Heart left ventricle (tissue), 16 donors: ENCODE measurements at regions of chr5 and their contacts with region 1.

Region 1: DNA sequence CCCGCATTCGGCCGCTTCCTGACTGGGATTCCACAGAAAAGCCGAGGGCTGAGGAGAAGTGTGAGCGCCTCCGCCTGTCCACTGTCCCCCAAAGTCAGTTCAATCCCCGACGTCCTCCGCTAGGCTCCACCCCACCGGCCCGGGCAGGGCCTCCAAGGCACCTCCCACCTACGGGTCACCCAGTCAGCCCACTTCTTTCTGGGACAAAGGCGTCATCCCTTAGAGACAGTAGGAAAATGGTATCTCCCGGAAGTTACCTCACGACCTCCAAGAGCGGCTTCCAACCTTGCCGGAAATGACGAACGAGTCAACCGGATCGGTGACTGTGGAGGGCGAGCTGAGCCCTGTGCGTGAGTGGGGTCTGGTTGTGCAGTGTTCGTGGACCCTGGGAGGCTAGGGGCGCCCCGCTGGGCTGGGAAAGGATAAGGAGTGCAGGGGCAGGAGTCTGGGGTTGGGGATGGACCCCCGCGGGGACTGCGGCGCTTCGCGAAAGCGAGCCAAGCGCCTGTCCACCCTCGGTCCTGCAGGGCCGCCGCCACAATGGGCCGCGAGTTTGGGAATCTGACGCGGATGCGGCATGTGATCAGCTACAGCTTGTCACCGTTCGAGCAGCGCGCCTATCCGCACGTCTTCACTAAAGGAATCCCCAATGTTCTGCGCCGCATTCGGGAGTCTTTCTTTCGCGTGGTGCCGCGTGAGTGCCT is at the starts of genes GDF9 and UQCRQ:
- DNase-seq: peak; percentile 95 to 98 (median 97)
- ATAC-seq: peak; percentile 99 to 100 (median 99)
- H3K4me3 ChIP-seq: peak within 1 kb of the TSS; percentile 67 to 95 (median 86)
- H3K27ac ChIP-seq: peak within 1 kb of the TSS; percentile 90 to 97 (median 94)
- H3K4me1 ChIP-seq: peaks cover 0 to 29% (median 17%) of the 10 kb centered on the region in 12 donors
- H3K27me3 ChIP-seq: no peaks in the 10 kb centered on the region
- CTCF ChIP-seq: peak in 8 of 12 donors; percentile 13 to 55 (median 32)
- POLR2A ChIP-seq: peak; percentile 38 to 89
- total RNA-seq, gene GDF9: 0.25 to 1.00 (median 0.51) TPM in 8 of 9 donors, not detected in the other
- total RNA-seq, gene UQCRQ: 539 to 2,034 (median 1,454) TPM

Region 2: DNA sequence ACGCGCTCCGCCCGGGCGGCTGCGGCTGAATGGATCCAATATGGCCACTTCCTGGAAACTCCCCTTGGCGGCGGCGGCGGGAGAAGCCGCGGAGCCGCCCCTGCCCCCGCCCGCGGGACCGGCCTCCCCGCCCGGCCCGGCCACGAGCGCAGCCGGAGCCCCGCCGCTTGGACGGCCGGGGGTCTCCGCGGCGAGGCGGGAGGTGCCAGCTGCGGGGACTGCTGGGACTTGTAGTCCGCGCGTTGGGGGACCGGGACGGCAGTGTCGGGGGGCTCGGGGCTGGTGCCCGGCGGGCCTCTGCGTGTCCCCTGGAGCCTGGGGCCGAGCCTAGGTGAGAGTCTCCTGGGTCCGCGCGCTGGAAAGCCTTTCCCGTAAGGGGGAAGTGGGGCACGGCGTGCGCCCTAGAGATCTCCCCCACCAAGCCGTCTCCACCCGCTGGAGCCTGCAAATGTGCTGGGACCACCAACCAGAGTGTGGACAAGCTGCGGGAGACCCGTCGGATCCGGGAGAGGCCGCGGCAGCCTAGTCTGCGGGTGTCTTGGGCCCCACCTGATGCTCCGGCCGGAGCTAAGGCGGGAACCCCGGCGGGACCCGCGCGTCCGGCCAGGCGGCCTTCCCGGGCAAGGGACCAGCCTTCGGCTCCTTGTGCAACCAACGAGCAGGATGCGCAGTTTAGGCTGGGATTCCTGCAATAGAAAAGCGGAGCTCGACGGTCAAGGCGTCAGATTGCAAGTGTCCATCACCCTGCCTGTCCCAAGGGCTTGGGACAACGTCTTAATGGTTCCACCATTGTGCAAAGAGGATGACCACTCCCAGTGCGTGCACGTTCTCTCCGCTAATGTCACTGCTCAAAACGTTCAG is 89.1 kb before region 1 on chr5 and contains the start of gene SEPTIN8:
- intact Hi-C with region 1: loop called in 1 of 10 experiments (anchors 5 kb)
- DNase-seq: peak; percentile 56 to 75 (median 70)
- ATAC-seq: peak in 3 of 4 donors; percentile 58 to 66 (median 59)
- H3K4me3 ChIP-seq: peak within 1 kb of the TSS; percentile 65 to 98 (median 90)
- H3K27ac ChIP-seq: peak within 1 kb of the TSS; percentile 72 to 92 (median 86)
- H3K4me1 ChIP-seq: peaks cover 0 to 52% (median 33%) of the 10 kb centered on the region in 12 donors
- H3K27me3 ChIP-seq: peaks cover 0 to 4% (median 0%) of the 10 kb centered on the region in 9 donors
- CTCF ChIP-seq: peak in 1 of 12 donors; percentile 11
- POLR2A ChIP-seq: peak in 1 of 2 donors; percentile 15
- total RNA-seq, gene SEPTIN8: 24.5 to 47.6 (median 33.8) TPM

Region 3: DNA sequence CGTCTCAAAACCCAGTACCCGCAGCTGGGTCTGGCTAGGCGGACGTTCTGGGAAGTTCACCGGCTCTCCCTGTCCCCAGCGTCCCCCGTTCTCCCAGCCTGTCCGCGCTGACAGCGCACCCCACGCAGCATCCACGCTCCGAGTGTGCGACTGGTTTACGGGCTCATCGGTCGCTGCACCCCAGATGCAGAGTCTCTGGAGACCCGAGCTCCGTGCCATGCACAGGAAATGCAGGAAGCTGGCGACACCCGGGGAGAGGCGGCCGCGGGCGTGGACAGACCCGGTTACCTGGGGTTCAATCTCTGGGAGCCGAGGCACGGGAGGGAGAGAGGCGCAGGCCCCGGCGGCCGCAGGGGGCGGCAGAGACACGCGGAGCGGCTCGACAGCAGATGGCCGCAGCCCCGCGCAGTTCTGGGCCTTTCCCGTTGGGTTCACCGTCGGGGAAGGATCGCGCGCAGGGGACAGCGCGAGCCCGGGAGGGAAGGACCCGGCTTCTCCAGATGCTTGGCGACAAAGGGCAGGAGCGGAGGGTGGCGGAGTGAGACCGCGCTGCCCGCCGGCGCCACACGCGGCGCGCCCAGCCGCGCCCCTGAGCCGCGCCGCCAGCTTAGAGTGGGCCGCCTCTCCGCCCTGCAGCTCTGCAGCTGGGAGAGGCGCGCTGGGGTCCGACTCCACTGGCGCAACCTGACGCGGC is 36.6 kb before region 1 on chr5:
- intact Hi-C with region 1: loop called (anchors 1 to 5 kb)
- DNase-seq: peak; percentile 75 to 89 (median 82)
- ATAC-seq: peak; percentile 75 to 92 (median 88)
- H3K4me3 ChIP-seq: peak overlapping the region; percentile 54 to 90 (median 78)
- H3K27ac ChIP-seq: peak overlapping the region; percentile 63 to 91 (median 84)
- H3K4me1 ChIP-seq: peaks cover 0 to 33% (median 13%) of the 10 kb centered on the region in 12 donors
- H3K27me3 ChIP-seq: peaks cover 0 to 25% (median 0%) of the 10 kb centered on the region in 9 donors
- CTCF ChIP-seq: peak; percentile 76 to 96 (median 90)
- POLR2A ChIP-seq: peak in 1 of 2 donors; percentile 15

Region 4: GRCh38 chr5:133051580-133052332 is 185.3 kb after region 1 on chr5 and contains the start of gene HSPA4:
- intact Hi-C with region 1: loop called in 1 of 10 experiments (anchors 10 kb)
- DNase-seq: peak; percentile 97 to 98 (median 98)
- ATAC-seq: peak; percentile 87 to 95 (median 92)
- H3K4me3 ChIP-seq: peak within 1 kb of the TSS; percentile 54 to 99 (median 80)
- H3K27ac ChIP-seq: peak within 1 kb of the TSS; percentile 87 to 99 (median 97)
- H3K4me1 ChIP-seq: peaks cover 5 to 51% (median 40%) of the 10 kb centered on the region in 12 donors
- H3K27me3 ChIP-seq: no peaks in the 10 kb centered on the region
- CTCF ChIP-seq: no peak
- POLR2A ChIP-seq: peak; percentile 82 to 96
- total RNA-seq, gene HSPA4: 57.5 to 132 (median 98.5) TPM

Region 5: DNA sequence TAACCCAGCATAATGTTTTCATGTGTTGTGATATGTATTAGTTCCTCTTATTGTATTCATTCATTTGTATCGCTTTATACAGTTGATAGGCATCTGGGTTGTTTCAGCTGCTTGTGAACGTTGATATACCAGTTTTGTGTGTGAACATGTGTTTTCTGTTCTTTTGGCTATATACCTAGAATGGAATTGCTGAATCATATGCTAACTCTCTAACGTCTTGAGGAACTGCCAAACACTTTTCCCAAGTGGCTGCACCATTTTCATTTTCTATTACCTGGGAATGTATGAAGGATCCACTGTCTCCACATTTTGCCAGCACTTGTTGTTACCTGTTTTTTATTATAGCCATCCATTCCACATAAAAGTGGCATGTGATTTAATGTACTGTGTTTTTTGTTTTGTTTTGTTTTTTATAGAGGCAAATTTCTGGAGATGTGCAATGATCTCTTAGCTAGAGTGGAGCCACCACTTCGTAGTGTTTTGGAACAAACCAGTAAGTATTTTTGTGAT is 219.9 kb after region 1 on chr5:
- intact Hi-C with region 1: no loop called
- DNase-seq: no peak
- ATAC-seq: no peak
- H3K4me3 ChIP-seq: no peak overlapping the region
- H3K27ac ChIP-seq: no peak overlapping the region
- H3K4me1 ChIP-seq: no peaks in the 10 kb centered on the region
- H3K27me3 ChIP-seq: no peaks in the 10 kb centered on the region
- CTCF ChIP-seq: no peak
- POLR2A ChIP-seq: no peak